Astrocyte of the cerebellum (primary cell): ENCODE measurements at regions of chr20 and their contacts with region 1.

Region 1: GRCh38 chr20:32296819-32297420 is 19.5 kb downstream of the KIF3B start:
- DNase-seq: no peak
- H3K4me3 ChIP-seq: no peak overlapping the region
- CTCF ChIP-seq: no peak

Region 2: GRCh38 chr20:31644701-31645100 is 652.2 kb before region 1 on chr20:
- in situ Hi-C with region 1: no loop called
- DNase-seq: no peak
- H3K4me3 ChIP-seq: no peak overlapping the region
- CTCF ChIP-seq: no peak

Region 3: DNA sequence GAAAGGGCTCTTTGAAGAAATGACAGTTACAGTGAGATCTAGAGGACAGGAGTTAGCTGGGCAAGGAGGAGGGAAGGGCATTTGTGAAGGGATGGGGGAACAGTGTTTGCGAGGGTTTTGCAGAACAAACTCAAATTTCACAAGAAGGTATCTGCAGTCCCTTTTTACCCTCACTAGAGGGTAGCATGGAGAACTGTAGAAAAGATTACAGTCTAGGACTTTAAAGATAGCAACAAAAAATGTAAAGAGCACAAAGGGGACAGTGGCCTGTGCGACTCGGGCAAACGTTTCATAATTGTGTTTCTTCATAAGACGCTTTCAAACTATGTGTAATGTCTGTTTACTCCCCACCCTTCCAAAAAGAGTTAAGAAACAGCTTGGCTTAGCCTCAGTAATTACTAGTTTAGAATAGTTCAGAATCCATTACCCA is 40.0 kb after region 1 on chr20:
- in situ Hi-C with region 1: loop called (anchors 5 kb)
- DNase-seq: no peak
- H3K4me3 ChIP-seq: no peak overlapping the region
- CTCF ChIP-seq: peak; percentile 69